ENCODE measurements at regions of chr3 and their contacts with region 1.

Region 1: DNA sequence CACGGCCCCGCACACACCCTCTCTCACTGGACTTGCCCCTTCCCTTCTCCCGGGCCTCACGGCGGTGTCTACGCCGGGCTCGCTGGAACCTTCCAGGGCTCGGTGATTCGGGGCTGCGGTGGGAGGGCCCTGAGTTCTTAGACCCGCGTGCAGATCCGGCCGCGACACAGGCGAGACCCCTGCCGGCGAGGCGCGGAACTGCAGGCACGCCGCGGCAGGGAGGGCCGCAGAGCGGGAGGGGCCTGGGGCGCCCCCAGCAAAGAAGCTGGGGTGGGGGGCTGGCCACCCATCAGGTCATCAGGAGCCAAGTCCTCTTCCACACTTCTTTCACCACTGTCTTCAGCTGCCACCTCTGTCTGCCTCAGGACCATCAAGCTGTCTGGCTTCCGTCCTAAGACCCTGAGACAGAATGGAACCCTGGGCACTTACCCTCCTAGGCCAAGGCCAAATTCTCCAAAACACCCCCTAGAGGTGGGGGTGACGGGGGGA is 164.5 kb downstream of the XXYLT1 start:
- DNase-seq: peak; percentile 66 to 80
- ATAC-seq: peak; percentile 65 to 86 (median 80)
- H3K4me3 ChIP-seq: peak overlapping the region in 7 of 10 donors; percentile 2 to 44 (median 32)
- H3K27ac ChIP-seq: peak overlapping the region in 2 of 10 donors; percentile 10 to 44
- H3K4me1 ChIP-seq: peaks cover 7 to 41% (median 19%) of the 10 kb centered on the region in 9 donors
- H3K27me3 ChIP-seq: no peaks in the 10 kb centered on the region
- CTCF ChIP-seq: peak; percentile 99 to 100 (median 100)

Region 2: DNA sequence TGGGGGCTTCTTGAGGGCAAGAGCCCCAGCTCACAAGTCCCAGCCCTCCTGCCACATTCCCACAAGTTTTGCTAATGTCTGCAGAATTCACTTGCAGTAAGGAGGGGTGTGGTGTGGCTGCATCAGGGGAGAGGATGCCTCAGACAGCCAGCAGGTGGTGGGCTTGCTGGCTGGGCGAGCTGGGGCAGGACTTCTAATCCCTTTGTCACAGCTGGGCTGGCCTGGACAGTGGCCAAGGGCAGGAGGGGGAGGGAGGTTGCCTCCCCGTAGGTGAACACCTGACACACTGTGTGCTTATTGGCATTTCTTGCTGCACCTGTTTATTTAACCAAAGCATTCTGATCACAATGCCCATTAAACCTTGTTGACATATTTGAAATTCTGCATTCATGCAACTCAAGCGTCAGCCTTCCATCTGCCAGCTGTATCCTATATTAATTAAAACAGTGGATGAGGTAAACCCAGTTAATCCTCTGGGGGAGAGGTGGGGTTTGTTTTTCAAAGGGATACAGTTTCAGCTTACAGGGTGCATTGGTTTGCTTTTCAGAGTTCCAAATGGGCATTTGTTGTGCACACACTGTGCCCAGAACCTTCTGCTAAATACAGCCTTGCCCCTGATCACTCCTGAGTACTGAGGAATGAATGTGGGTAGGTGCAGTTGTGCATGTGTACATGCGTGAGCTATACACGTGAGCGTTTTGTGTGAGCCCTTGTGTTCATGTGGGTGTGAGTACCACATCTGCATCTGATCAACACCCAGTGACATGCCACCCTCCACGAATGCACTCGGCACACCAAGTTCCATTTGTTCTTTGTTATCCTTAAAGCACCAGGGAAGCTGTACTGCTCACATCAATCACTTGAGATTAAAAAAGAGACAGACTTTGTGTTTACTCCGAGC is 104.3 kb before region 1 on chr3:
- intact Hi-C with region 1: loop called (anchors 2 to 10 kb)
- DNase-seq: peak; percentile 57 to 72
- ATAC-seq: peak; percentile 64 to 84 (median 80)
- H3K4me3 ChIP-seq: no peak overlapping the region
- H3K27ac ChIP-seq: peak overlapping the region in 6 of 10 donors; percentile 2 to 71 (median 51)
- H3K4me1 ChIP-seq: peaks cover 2 to 26% (median 10%) of the 10 kb centered on the region in 9 donors
- H3K27me3 ChIP-seq: no peaks in the 10 kb centered on the region
- CTCF ChIP-seq: peak; percentile 54 to 74 (median 66)

Region 3: DNA sequence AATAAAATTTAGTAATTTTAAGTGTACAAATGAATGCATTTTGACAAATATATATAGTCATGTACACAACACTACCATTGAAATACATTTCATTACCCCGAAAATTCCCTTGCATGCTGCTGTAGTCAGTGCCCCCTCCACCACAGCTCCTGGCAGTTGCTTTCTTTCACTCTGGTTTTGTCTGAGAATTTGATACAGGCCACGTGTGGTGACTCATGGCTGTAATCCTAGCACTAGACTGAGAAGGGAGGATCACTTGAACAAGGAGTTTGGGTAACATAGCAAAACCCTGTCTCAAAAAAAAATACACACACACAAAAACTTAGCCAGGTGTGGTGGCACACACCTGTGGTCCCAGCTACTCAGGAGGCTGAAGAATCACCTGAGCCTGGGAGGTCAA is 910.0 kb after region 1 on chr3:
- intact Hi-C with region 1: no loop called
- DNase-seq: no peak
- ATAC-seq: no peak
- H3K4me3 ChIP-seq: no peak overlapping the region
- H3K27ac ChIP-seq: no peak overlapping the region
- H3K4me1 ChIP-seq: no peaks in the 10 kb centered on the region
- H3K27me3 ChIP-seq: peaks cover 0 to 2% (median 0%) of the 10 kb centered on the region in 7 donors
- CTCF ChIP-seq: no peak